ENCODE measurements at regions of chr12 and their contacts with region 1.

Region 1: GRCh38 chr12:54294152-54294952 is 6.5 kb downstream of the NFE2 start:
- DNase-seq: peak; percentile 79
- CTCF ChIP-seq: peak; percentile 91

Region 2: DNA sequence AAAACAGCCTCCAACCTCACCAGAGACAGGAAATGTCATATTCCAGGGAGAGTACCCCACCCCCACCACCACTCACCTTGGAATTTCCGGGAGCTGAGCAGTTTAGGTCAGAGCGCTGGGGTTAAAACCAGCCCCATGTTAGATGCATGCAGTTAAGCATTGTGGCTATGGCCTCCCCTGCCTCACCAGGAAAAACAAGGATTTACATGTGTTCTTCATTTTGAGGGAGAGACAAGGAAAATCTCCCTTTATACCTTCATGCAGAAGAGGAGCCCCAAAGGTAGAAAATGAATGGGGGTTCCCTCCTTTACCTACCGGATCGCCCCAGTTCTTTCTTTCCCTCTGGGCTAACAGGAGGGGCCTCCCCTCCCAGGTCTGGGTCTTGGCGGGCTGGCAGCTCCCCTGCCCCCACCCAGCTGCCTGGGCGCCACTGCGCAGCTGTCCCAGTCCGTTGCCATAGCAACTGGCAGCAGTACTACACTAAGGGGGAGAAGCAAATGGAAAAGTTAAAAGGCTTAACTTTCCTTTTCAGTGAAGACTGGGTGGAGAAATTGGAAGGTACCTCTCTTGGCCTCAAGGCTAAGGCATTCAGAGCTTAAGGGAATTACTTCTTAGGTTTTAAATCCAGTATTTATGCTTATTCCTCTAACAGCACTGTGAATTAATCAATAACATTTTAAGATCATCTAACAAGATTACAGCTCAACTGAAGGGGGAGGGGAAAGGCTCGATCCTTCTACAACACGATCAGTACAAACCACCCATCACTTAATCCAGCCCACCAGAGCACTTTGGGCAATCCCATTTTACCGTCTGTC is 34.9 kb before region 1 on chr12:
- CTCF ChIA-PET with region 1: interaction called, 13 read pairs
- POLR2A ChIA-PET with region 1: interaction called, 3 read pairs
- DNase-seq: peak; percentile 82
- CTCF ChIP-seq: no peak

Region 3: GRCh38 chr12:54306925-54307741 is 12.8 kb after region 1 on chr12:
- CTCF ChIA-PET with region 1: interaction called, 27 read pairs
- POLR2A ChIA-PET with region 1: interaction called, 6 read pairs
- DNase-seq: no peak
- CTCF ChIP-seq: no peak

Region 4: DNA sequence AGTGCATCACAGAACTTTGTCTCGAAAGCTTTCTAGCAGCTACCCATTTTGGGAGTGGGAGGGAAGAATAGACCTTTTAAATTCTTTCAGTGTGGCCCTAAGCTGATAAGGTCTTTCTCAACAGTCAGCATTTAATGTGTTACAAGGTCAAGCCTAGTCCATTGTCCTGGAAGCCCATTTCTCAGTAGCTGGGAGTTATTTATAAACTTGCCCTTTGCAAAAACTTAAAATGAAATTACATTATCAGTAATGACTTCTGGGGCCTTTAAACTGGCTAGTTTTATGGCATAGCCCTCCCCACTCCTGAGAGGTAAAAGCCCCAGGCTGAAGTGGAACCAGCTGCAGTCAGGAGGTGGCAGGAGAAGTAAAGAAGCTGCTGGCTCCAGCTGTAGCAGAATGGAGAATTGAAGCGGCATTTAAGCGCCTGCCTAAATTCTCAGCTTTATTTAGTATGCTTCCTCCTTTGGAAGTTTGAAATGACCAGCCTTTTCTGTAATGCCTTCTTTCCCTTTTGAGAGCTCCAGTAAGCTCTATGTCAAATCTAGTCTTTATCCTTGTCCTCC is 43.0 kb after region 1 on chr12:
- CTCF ChIA-PET with region 1: interaction called, 11 read pairs
- POLR2A ChIA-PET with region 1: interaction called, 3 read pairs
- DNase-seq: no peak
- CTCF ChIP-seq: no peak

Region 5: GRCh38 chr12:54352022-54352531 is 57.7 kb after region 1 on chr12:
- CTCF ChIA-PET with region 1: interaction called, 14 read pairs
- POLR2A ChIA-PET with region 1: interaction called, 5 read pairs
- DNase-seq: no peak
- CTCF ChIP-seq: no peak

Region 6: DNA sequence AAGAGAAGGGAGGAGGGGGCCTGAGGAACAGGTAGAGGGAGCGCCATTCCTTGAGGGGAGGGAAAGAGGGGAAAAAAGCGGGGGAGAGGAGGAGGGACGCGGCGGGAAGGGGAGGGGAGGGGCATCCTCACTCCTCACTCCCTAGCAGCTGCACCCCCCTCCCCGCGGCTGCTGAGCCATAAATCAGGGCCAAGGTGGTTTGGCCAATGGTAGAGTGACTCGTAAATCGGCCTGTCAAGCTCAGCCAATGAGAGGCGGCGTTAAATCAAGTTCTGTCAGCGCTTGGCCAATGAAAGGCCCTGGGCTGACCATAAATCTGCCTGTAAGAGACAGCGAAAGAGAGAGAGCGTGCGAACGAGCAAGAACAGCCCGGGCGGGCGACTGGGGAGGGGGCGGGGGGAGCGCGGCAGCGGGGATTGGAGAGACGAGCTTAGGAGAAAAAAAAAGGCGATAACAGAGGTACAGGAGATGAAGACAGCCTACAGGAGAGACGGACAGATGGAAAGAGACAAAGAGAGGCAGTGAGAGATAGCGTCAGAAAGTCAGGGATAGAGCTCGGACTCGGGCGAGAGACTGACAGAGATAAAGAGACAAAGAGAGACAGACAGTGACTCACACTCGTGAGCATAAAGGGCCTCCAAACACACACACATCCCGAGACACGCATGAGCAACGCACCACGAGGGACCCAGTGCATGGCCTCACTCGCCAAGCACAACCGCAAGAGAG is 64.8 kb after region 1 on chr12:
- CTCF ChIA-PET with region 1: interaction called, 69 read pairs
- POLR2A ChIA-PET with region 1: interaction called, 5 read pairs
- DNase-seq: peak; percentile 97
- CTCF ChIP-seq: no peak

Region 7: DNA sequence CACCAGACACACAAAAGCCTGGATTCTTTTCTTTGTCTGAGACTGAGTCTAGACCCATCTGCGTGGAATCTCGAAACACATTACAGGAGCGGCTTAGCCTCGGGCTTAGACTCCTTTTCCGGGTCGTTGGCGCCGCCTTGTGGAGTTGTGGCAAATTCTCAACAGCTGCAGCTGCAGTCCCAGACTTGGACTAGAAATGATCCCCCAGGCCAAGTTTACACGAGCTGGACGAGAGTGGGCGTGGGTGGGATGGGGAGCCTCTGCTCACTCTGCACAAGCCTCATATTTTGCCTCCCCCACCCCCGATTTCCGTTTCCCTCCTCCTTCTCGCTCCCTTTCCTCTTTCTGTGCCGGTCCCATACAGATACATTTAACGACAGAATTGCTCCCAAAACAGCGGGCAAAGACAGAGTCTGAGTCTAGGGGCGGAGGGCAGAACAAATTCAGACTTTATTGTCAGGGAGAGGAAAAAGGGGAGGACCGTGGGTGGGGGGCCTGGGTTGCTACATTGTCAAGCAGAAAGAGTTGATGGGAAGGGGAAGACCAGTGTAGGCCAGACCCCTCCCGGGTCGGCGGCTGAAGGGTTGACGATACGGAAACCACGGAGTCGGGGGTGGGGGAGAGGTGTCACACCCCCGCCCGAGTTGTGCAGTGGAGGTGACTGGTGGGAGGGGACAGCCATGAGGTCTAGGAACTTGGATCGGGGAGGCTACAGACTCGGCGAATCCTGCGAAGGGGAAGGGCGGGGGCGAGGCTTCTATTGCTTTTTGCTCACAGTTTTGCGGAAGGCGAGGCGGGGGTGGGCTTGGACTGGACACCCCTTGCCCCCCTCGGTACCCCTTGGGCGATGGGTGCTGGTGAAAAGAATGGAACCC is 74.6 kb after region 1 on chr12:
- CTCF ChIA-PET with region 1: interaction called, 69 read pairs
- POLR2A ChIA-PET with region 1: no interaction called
- DNase-seq: peak; percentile 82
- CTCF ChIP-seq: peak; percentile 96

Region 8: GRCh38 chr12:54571193-54572188 is 277.1 kb after region 1 on chr12:
- CTCF ChIA-PET with region 1: no interaction called
- POLR2A ChIA-PET with region 1: no interaction called
- DNase-seq: no peak
- CTCF ChIP-seq: no peak